ENCODE measurements at regions of chr2 and their contacts with region 1.

Region 1: GRCh38 chr2:79887747-79888374 is 375.0 kb downstream of the CTNNA2 start:
- DNase-seq: no peak
- H3K4me3 ChIP-seq: no peak overlapping the region
- H3K27ac ChIP-seq: no peak overlapping the region
- H3K4me1 ChIP-seq: peaks cover 0 to 11% (median 8%) of the 10 kb centered on the region in 4 experiments; a peak in 4 of 7 replicates
- H3K27me3 ChIP-seq: no peaks in the 10 kb centered on the region
- CTCF ChIP-seq: peak in 2 of 3 experiments; percentile 55 to 67; a peak in 2 of 4 replicates
- EP300 ChIP-seq: no peak
- POLR2A ChIP-seq: no peak
- RAD21 ChIP-seq: peak; percentile 94 to 95

Region 2: GRCh38 chr2:79820281-79820680 is 67.6 kb before region 1 on chr2:
- CTCF ChIA-PET with region 1: no interaction called
- POLR2A ChIA-PET with region 1: no interaction called
- DNase-seq: no peak
- H3K4me3 ChIP-seq: no peak overlapping the region
- H3K27ac ChIP-seq: no peak overlapping the region
- H3K4me1 ChIP-seq: no peaks in the 10 kb centered on the region
- H3K27me3 ChIP-seq: no peaks in the 10 kb centered on the region
- CTCF ChIP-seq: no peak
- EP300 ChIP-seq: no peak
- POLR2A ChIP-seq: no peak
- RAD21 ChIP-seq: no peak

Region 3: DNA sequence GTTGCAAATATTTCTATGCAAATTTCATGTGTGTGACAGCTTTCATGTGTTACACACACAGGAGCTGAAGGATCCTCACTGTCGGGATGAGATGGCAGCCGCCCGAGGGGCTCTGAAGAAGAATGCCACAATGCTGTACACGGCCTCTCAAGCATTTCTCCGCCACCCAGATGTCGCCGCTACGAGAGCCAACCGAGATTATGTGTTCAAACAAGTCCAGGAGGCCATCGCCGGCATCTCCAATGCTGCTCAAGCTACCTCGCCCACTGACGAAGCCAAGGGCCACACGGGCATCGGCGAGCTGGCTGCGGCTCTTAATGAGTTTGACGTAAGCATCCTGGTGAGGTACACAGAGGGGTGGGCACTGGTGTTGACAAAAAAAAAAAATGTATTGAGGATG is 13.8 kb before region 1 on chr2:
- CTCF ChIA-PET with region 1: interaction called, 10 read pairs
- POLR2A ChIA-PET with region 1: no interaction called
- DNase-seq: no peak
- H3K4me3 ChIP-seq: no peak overlapping the region
- H3K27ac ChIP-seq: no peak overlapping the region
- H3K4me1 ChIP-seq: no peaks in the 10 kb centered on the region
- H3K27me3 ChIP-seq: no peaks in the 10 kb centered on the region
- CTCF ChIP-seq: no peak
- EP300 ChIP-seq: no peak
- POLR2A ChIP-seq: no peak
- RAD21 ChIP-seq: no peak